MCF 10A (cell line): ENCODE measurements at regions of chr1 and their contacts with region 1.

Region 1: GRCh38 chr1:70354332-70355110 is at the start of gene ANKRD13C:
- DNase-seq: peak; percentile 97
- H3K4me3 Mint-ChIP-seq: peak within 1 kb of the TSS; percentile 98
- H3K27ac Mint-ChIP-seq: peak within 1 kb of the TSS; percentile 99
- H3K4me1 Mint-ChIP-seq: peaks cover 14% of the 10 kb centered on the region
- H3K27me3 Mint-ChIP-seq: no peaks in the 10 kb centered on the region
- CTCF ChIP-seq: no peak
- total RNA-seq, gene ANKRD13C: 17.8 and 18.9 TPM in 2 replicates

Region 2: DNA sequence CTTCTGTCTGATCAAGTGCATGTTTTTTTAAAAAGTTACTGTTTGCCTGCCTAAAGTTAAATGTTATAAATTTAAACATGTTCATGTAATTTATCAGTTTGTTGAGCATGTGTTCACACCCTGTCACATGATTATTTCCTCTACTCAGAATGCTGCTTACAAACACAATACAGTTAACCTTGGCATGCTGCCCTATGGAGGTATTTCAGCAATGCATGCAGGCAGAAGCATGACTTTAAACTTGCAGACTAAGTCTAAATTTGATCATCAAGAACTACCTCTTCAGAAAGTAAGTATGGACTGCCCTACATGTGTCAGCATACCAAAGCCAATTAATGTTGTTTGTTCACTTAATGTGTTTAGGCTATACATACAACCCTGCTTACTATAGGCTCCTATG is 310.7 kb before region 1 on chr1:
- CTCF ChIA-PET with region 1: no interaction called
- POLR2A ChIA-PET with region 1: no interaction called
- intact Hi-C with region 1: no loop called
- DNase-seq: peak; percentile 45
- H3K4me3 Mint-ChIP-seq: no peak overlapping the region
- H3K27ac Mint-ChIP-seq: no peak overlapping the region
- H3K4me1 Mint-ChIP-seq: peaks cover 12% of the 10 kb centered on the region
- H3K27me3 Mint-ChIP-seq: peaks cover 10% of the 10 kb centered on the region
- CTCF ChIP-seq: no peak

Region 3: GRCh38 chr1:70205434-70206118 is 148.9 kb before region 1 on chr1 and contains the start of gene LRRC40:
- CTCF ChIA-PET with region 1: interaction called, 3 read pairs
- POLR2A ChIA-PET with region 1: interaction called, 23 read pairs
- intact Hi-C with region 1: loop called (anchors 5 kb)
- DNase-seq: peak; percentile 94
- H3K4me3 Mint-ChIP-seq: peak within 1 kb of the TSS; percentile 80
- H3K27ac Mint-ChIP-seq: peak within 1 kb of the TSS; percentile 98
- H3K4me1 Mint-ChIP-seq: peaks cover 40% of the 10 kb centered on the region
- H3K27me3 Mint-ChIP-seq: no peaks in the 10 kb centered on the region
- CTCF ChIP-seq: no peak
- total RNA-seq, gene LRRC40: 14.7 and 14.9 TPM in 2 replicates

Region 4: GRCh38 chr1:70277875-70278274 is 76.6 kb before region 1 on chr1:
- CTCF ChIA-PET with region 1: no interaction called
- POLR2A ChIA-PET with region 1: interaction called, 4 read pairs
- intact Hi-C with region 1: loop called (anchors 2 kb)
- DNase-seq: no peak
- H3K4me3 Mint-ChIP-seq: no peak overlapping the region
- H3K27ac Mint-ChIP-seq: no peak overlapping the region
- H3K4me1 Mint-ChIP-seq: no peaks in the 10 kb centered on the region
- H3K27me3 Mint-ChIP-seq: no peaks in the 10 kb centered on the region
- CTCF ChIP-seq: no peak

Region 5: DNA sequence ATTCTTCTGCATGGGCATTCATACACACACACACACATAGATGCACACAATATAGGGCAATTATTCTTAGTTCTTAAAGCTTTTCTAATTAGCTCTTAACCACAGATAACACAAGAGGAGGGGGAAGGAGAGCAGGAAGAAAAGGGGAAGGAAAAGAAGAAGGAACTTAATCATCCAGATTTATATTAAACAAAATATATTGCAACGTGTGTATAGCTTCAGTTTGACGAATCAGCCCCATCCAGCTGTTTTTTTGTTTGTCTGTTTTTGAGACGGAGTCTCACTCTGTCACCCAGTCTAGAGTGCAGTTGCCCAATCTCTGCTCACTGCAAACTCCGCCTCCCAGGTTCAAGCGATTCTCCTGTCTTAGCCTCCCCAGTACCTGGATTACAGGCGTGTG is 21.7 kb after region 1 on chr1:
- CTCF ChIA-PET with region 1: no interaction called
- POLR2A ChIA-PET with region 1: no interaction called
- intact Hi-C with region 1: no loop called
- DNase-seq: no peak
- H3K4me3 Mint-ChIP-seq: no peak overlapping the region
- H3K27ac Mint-ChIP-seq: no peak overlapping the region
- H3K4me1 Mint-ChIP-seq: no peaks in the 10 kb centered on the region
- H3K27me3 Mint-ChIP-seq: no peaks in the 10 kb centered on the region
- CTCF ChIP-seq: no peak

Region 6: GRCh38 chr1:70410604-70411359 is 56.3 kb after region 1 on chr1 and contains the start of gene CTH:
- CTCF ChIA-PET with region 1: interaction called, 8 read pairs
- POLR2A ChIA-PET with region 1: interaction called, 169 read pairs
- intact Hi-C with region 1: loop called (anchors 1 kb)
- DNase-seq: peak; percentile 97
- H3K4me3 Mint-ChIP-seq: peak within 1 kb of the TSS; percentile 99
- H3K27ac Mint-ChIP-seq: peak within 1 kb of the TSS; percentile 95
- H3K4me1 Mint-ChIP-seq: no peaks in the 10 kb centered on the region
- H3K27me3 Mint-ChIP-seq: no peaks in the 10 kb centered on the region
- CTCF ChIP-seq: no peak
- total RNA-seq, gene CTH: 3.4 TPM in 2 replicates

Region 7: DNA sequence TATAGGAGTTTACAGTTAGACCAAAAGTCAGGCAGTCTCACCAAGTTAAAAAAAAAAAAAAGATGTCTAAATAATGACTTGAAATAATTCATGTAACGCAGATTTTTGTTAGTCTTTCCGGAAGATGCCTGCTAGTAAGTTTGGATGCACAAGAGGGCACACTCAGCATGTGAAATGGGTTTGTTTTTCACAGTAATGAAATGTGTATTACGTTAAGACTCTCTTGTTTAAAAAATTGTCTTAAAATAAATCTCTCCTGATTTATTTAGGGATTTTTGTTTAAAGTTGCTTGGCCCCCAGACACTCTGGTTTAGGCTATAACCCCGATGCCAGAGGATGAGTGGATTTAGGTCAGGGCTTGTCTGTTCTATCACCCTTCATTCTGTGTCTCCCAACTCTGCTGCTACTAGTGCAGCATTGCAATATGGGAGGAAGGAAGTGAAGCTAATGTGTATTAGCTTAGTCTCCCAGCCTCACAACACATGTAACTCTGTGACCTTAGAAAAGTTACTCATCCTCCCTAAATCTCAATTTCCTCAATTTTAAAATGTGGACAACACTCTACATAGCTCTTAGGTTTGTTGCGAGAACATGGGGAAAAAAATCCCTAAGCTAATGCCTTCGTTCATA is 82.2 kb after region 1 on chr1:
- CTCF ChIA-PET with region 1: no interaction called
- POLR2A ChIA-PET with region 1: no interaction called
- intact Hi-C with region 1: no loop called
- DNase-seq: no peak
- H3K4me3 Mint-ChIP-seq: no peak overlapping the region
- H3K27ac Mint-ChIP-seq: no peak overlapping the region
- H3K4me1 Mint-ChIP-seq: no peaks in the 10 kb centered on the region
- H3K27me3 Mint-ChIP-seq: no peaks in the 10 kb centered on the region
- CTCF ChIP-seq: no peak

Region 8: DNA sequence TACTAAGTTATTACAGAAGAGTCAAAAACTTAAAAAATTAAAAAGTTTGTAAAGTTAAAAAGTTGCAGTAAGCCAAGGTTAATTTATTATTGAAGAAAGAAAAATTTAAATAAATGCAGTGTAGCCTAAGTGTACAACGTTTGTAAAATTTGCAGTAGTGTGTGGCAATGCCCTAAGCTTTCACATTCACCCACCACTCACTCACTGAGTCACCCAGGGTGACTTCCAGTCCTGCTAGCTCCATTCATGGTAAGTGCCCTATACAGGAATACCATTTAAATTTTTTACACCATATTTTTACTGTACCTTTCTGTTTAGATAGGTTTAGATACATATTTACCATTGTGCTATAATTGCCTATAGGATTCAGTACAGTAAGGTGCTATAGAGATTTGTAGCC is 145.2 kb after region 1 on chr1:
- CTCF ChIA-PET with region 1: no interaction called
- POLR2A ChIA-PET with region 1: no interaction called
- intact Hi-C with region 1: no loop called
- DNase-seq: peak; percentile 30
- H3K4me3 Mint-ChIP-seq: no peak overlapping the region
- H3K27ac Mint-ChIP-seq: no peak overlapping the region
- H3K4me1 Mint-ChIP-seq: no peaks in the 10 kb centered on the region
- H3K27me3 Mint-ChIP-seq: no peaks in the 10 kb centered on the region
- CTCF ChIP-seq: no peak

Region 9: GRCh38 chr1:71080739-71081696 is 726.5 kb after region 1 on chr1 and contains the start of gene ZRANB2:
- CTCF ChIA-PET with region 1: no interaction called
- POLR2A ChIA-PET with region 1: interaction called, 13 read pairs
- intact Hi-C with region 1: no loop called
- DNase-seq: peak; percentile 97
- H3K4me3 Mint-ChIP-seq: peak within 1 kb of the TSS; percentile 97
- H3K27ac Mint-ChIP-seq: peak within 1 kb of the TSS; percentile 100
- H3K4me1 Mint-ChIP-seq: peaks cover 6% of the 10 kb centered on the region
- H3K27me3 Mint-ChIP-seq: peaks cover 11% of the 10 kb centered on the region
- CTCF ChIP-seq: peak; percentile 40
- total RNA-seq, gene ZRANB2: 134 and 164 TPM in 2 replicates